H1 (cell line): ENCODE measurements at regions of chr10 and their contacts with region 1.

Region 1: DNA sequence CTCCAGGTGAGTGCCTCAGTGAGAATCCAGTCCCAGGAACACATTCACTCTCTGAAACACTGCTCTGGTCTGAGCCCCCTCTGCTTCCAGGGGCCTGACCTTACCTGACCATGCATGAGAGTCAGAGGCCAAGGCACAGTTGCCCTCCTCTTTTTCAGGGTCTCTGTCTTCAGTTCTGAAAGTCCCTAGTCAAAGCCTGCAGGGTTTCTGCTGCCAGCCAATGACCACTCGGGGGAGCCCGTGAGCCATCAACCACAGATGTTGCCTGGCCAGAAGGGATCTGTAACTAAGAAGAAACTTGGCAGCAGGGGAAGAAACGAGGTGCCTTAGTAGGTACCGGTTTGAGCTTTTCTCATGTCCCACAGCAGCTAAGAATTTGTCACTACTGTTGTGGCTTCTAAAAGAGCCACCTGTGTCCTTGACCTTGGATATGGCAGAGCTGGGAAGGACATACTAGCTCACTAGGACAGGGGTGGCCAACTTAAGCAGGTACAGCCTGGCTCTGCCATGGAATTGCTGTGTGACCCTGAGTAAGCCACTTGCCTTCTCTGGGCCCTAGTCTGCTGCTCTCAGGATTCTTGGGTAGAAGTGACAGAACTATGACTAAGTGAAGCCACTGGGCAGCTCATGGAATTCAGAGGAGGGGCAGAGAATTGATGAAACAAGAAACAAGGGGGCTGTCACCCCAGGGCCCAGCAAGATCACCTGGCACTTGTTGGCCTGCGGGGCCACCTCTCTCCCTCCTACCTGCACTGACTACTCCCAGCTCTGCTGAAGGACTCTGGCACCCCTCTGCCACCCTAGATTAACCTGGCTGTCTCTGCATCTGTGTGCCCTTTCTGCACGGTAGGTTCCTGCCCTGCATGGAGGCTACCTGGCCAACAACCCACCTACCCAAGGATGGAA is 83.8 kb upstream of the GPR26 start:
- DNase-seq: peak; percentile 60 to 94
- H3K4me3 ChIP-seq: no peak overlapping the region
- H3K27ac ChIP-seq: no peak overlapping the region
- H3K4me1 ChIP-seq: peaks cover 0 to 17% (median 14%) of the 10 kb centered on the region in 4 experiments; a peak in 6 of 7 replicates
- H3K27me3 ChIP-seq: peaks cover 0 to 10% (median 2%) of the 10 kb centered on the region in 4 experiments; a peak in 4 of 7 replicates
- CTCF ChIP-seq: peak; percentile 83 to 97 (median 97)
- EP300 ChIP-seq: peak in 1 of 2 experiments; percentile 11; a peak in 1 of 3 replicates
- POLR2A ChIP-seq: no peak
- RAD21 ChIP-seq: peak; percentile 97 to 99

Region 2: GRCh38 chr10:123367195-123367594 is 215.1 kb before region 1 on chr10:
- CTCF ChIA-PET with region 1: no interaction called
- POLR2A ChIA-PET with region 1: no interaction called
- DNase-seq: no peak
- H3K4me3 ChIP-seq: no peak overlapping the region
- H3K27ac ChIP-seq: no peak overlapping the region
- H3K4me1 ChIP-seq: no peaks in the 10 kb centered on the region
- H3K27me3 ChIP-seq: no peaks in the 10 kb centered on the region
- CTCF ChIP-seq: no peak
- EP300 ChIP-seq: no peak
- POLR2A ChIP-seq: no peak
- RAD21 ChIP-seq: no peak

Region 3: DNA sequence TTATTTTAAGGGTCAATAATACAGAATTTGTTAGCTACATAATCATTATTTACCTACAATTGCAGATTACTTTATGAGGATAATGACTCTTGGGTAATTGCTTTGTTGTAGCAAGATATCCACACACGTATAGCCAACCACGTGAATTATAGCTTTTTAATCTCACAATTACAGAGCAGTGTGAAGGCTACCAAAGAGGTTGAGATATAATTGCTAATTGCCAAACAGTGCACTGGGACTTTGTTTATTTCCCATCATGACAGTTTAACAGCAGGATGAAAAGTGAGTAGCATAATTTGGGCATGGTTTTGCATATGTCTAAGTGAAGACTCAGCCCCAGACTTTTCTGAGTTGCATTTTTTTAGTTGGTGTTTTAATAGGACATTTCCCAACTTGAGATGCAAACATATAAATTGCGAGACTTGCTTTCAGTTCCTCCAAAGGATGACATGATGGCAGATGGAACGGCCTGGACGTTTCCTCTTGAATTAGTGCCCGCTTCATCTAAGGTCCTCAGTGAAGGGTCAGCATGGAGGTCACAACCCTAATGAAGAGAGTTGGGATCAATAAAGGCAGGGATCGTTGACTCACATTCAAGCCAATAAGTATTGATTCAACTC is 96.9 kb before region 1 on chr10:
- CTCF ChIA-PET with region 1: no interaction called
- POLR2A ChIA-PET with region 1: no interaction called
- DNase-seq: no peak
- H3K4me3 ChIP-seq: no peak overlapping the region
- H3K27ac ChIP-seq: no peak overlapping the region
- H3K4me1 ChIP-seq: peaks cover 0 to 2% (median 0%) of the 10 kb centered on the region in 4 experiments; a peak in 1 of 7 replicates
- H3K27me3 ChIP-seq: no peaks in the 10 kb centered on the region
- CTCF ChIP-seq: no peak
- EP300 ChIP-seq: no peak
- POLR2A ChIP-seq: no peak
- RAD21 ChIP-seq: no peak

Region 4: GRCh38 chr10:123552760-123553554 is 29.4 kb before region 1 on chr10:
- CTCF ChIA-PET with region 1: no interaction called
- POLR2A ChIA-PET with region 1: no interaction called
- DNase-seq: peak in 1 of 2 experiments; percentile 31
- H3K4me3 ChIP-seq: no peak overlapping the region
- H3K27ac ChIP-seq: no peak overlapping the region
- H3K4me1 ChIP-seq: peaks cover 0 to 4% (median 2%) of the 10 kb centered on the region in 4 experiments; a peak in 2 of 7 replicates
- H3K27me3 ChIP-seq: no peaks in the 10 kb centered on the region; a peak in 1 of 7 replicates
- CTCF ChIP-seq: no peak
- EP300 ChIP-seq: no peak
- POLR2A ChIP-seq: no peak
- RAD21 ChIP-seq: no peak

Region 5: GRCh38 chr10:123599366-123599849 is 17.1 kb after region 1 on chr10:
- CTCF ChIA-PET with region 1: interaction called, 26 read pairs
- POLR2A ChIA-PET with region 1: no interaction called
- DNase-seq: no peak
- H3K4me3 ChIP-seq: no peak overlapping the region
- H3K27ac ChIP-seq: no peak overlapping the region
- H3K4me1 ChIP-seq: no peaks in the 10 kb centered on the region; a peak in 1 of 7 replicates
- H3K27me3 ChIP-seq: no peaks in the 10 kb centered on the region
- CTCF ChIP-seq: no peak
- EP300 ChIP-seq: no peak
- POLR2A ChIP-seq: no peak
- RAD21 ChIP-seq: no peak

Region 6: DNA sequence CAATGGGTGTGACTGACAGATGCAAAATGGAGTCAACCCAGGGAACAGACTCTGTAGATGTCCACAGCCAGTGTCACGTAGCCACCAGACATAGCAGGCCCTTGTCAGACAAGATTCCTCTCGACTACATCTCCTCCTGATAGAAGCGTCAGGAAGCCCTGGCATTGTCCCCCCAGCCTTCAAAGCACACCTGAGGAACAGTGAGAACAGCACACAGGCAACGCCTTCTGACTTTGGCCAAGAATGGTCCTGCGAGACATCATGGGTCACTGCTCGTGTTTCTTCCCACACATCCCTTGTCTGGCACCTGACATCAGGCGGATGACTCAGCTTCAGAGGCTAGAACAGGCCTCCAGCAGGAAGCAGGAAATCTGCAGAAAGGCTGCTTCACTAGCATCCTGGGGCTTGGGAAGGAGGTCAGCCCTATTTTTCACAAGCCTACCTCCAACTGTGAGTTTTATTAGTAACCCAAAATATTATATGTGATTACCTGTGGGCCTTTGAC is 31.1 kb after region 1 on chr10:
- CTCF ChIA-PET with region 1: interaction called, 12 read pairs
- POLR2A ChIA-PET with region 1: no interaction called
- DNase-seq: no peak
- H3K4me3 ChIP-seq: no peak overlapping the region
- H3K27ac ChIP-seq: no peak overlapping the region
- H3K4me1 ChIP-seq: peaks cover 0 to 5% (median 2%) of the 10 kb centered on the region in 4 experiments; a peak in 4 of 7 replicates
- H3K27me3 ChIP-seq: no peaks in the 10 kb centered on the region
- CTCF ChIP-seq: no peak
- EP300 ChIP-seq: no peak
- POLR2A ChIP-seq: no peak
- RAD21 ChIP-seq: no peak

Region 7: GRCh38 chr10:123642293-123642692 is 60.0 kb after region 1 on chr10:
- CTCF ChIA-PET with region 1: interaction called, 135 read pairs
- POLR2A ChIA-PET with region 1: interaction called, 3 read pairs
- DNase-seq: no peak
- H3K4me3 ChIP-seq: no peak overlapping the region
- H3K27ac ChIP-seq: no peak overlapping the region
- H3K4me1 ChIP-seq: peaks cover 5 to 25% (median 13%) of the 10 kb centered on the region in 4 experiments
- H3K27me3 ChIP-seq: no peaks in the 10 kb centered on the region; a peak in 1 of 7 replicates
- CTCF ChIP-seq: peak in 1 of 3 experiments; percentile 1; a peak in 1 of 4 replicates
- EP300 ChIP-seq: no peak
- POLR2A ChIP-seq: no peak
- RAD21 ChIP-seq: peak in 1 of 2 experiments; percentile 21; a peak in 2 of 4 replicates

Region 8: GRCh38 chr10:123655751-123656150 is 73.4 kb after region 1 on chr10:
- CTCF ChIA-PET with region 1: interaction called, 401 read pairs
- POLR2A ChIA-PET with region 1: no interaction called
- DNase-seq: peak in 1 of 2 experiments; percentile 71
- H3K4me3 ChIP-seq: no peak overlapping the region
- H3K27ac ChIP-seq: no peak overlapping the region
- H3K4me1 ChIP-seq: peaks cover 0 to 4% (median 3%) of the 10 kb centered on the region in 4 experiments; a peak in 5 of 7 replicates
- H3K27me3 ChIP-seq: no peaks in the 10 kb centered on the region; a peak in 1 of 7 replicates
- CTCF ChIP-seq: peak; percentile 63 to 81 (median 72)
- EP300 ChIP-seq: no peak
- POLR2A ChIP-seq: no peak
- RAD21 ChIP-seq: peak; percentile 83 to 92

Region 9: DNA sequence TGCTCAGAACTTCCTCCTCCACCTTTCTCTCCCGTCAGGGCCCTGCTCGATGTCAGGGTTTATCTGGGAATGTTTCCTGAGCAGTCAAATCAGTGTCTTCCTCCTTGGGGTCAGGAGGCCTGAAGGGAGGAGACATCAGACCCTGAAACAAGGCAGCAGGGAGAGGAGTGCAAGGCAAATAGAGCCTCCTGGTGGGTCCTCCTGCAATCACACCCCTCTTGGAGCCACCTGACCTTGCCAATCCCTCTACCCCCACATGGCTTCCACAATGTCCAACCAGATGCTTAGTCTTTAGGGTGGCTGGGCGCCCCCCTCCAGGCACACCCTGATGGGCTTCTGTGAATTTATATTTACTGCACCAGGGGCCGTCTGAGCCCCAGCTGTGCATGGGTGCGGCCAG is 96.0 kb after region 1 on chr10:
- CTCF ChIA-PET with region 1: interaction called, 401 read pairs
- POLR2A ChIA-PET with region 1: interaction called, 4 read pairs
- DNase-seq: no peak
- H3K4me3 ChIP-seq: no peak overlapping the region
- H3K27ac ChIP-seq: no peak overlapping the region
- H3K4me1 ChIP-seq: no peaks in the 10 kb centered on the region
- H3K27me3 ChIP-seq: no peaks in the 10 kb centered on the region; a peak in 2 of 7 replicates
- CTCF ChIP-seq: peak; percentile 56 to 62 (median 62)
- EP300 ChIP-seq: no peak
- POLR2A ChIP-seq: no peak
- RAD21 ChIP-seq: peak; percentile 52 to 65

Region 10: DNA sequence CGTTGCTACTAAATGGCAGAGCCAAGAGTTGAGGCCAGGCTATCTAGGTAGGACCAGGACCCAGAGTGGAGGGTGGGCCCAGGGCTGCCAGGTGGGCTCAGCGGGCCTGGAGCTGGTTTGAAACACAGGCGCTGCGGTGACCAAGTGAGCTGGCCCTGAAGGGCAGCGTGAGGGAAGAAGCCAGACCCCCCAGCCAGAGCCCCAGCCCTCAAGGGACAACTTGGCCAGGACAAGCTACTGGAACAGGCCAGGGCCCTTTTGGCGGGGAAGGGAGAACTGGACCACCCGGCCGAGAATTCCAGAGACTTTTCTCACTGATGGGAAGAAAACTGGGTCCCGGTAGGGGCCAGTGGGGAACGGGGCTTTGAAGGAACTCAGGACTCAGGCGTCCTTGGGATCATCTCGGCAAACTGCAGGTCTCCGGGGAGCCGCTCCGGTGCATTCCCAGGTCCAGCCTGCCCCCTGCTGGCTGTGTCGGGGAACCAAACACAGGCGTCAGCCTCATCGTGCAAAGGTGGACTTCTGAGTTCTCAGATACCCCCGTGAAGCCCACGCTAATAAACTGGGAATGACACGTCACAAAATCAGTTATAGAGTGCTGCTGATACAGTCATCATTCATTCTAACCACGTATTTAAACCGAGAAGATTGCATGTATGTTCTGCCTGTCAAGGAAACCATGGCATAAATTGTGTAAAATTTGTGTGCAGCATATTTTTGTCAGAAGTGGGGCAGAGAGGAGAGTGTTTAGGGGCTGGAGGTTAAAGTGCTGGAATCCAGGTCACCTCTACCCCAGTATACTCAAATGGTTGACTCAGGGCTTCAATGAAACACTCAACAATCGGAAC is 385.3 kb after region 1 on chr10:
- CTCF ChIA-PET with region 1: interaction called, 60 read pairs
- POLR2A ChIA-PET with region 1: no interaction called
- DNase-seq: peak; percentile 63 to 95
- H3K4me3 ChIP-seq: no peak overlapping the region
- H3K27ac ChIP-seq: no peak overlapping the region
- H3K4me1 ChIP-seq: peaks cover 2 to 20% (median 8%) of the 10 kb centered on the region in 4 experiments
- H3K27me3 ChIP-seq: peaks cover 0 to 8% (median 5%) of the 10 kb centered on the region in 4 experiments; a peak in 3 of 7 replicates
- CTCF ChIP-seq: peak; percentile 89 to 95 (median 91)
- EP300 ChIP-seq: no peak
- POLR2A ChIP-seq: no peak
- RAD21 ChIP-seq: peak; percentile 99